SK-N-SH (cell line): ENCODE measurements at regions of chr10 and their contacts with region 1.

Region 1: GRCh38 chr10:79195091-79195923 is 126.5 kb downstream of the ZMIZ1 start:
- DNase-seq: peak; percentile 85
- H3K4me3 ChIP-seq: peak overlapping the region in 1 of 2 experiments; percentile 24; a peak in 1 of 4 replicates
- H3K27ac ChIP-seq: peak overlapping the region; percentile 70 to 93
- H3K4me1 ChIP-seq: peaks cover 25 to 72% of the 10 kb centered on the region in 2 experiments
- H3K27me3 ChIP-seq: no peaks in the 10 kb centered on the region
- CTCF ChIP-seq: peak; percentile 93
- EP300 ChIP-seq: no peak
- RAD21 ChIP-seq: peak; percentile 95

Region 2: GRCh38 chr10:78047314-78047891 is 1147.9 kb before region 1 on chr10:
- CTCF ChIA-PET with region 1: interaction called, 65 read pairs
- POLR2A ChIA-PET with region 1: interaction called, 3 read pairs
- DNase-seq: peak; percentile 80
- H3K4me3 ChIP-seq: no peak overlapping the region; a peak in 1 of 4 replicates
- H3K27ac ChIP-seq: peak overlapping the region in 1 of 2 experiments; percentile 70; a peak in 2 of 4 replicates
- H3K4me1 ChIP-seq: peaks cover 22 to 26% of the 10 kb centered on the region in 2 experiments; a peak in 3 of 4 replicates
- H3K27me3 ChIP-seq: no peaks in the 10 kb centered on the region
- CTCF ChIP-seq: peak; percentile 94
- EP300 ChIP-seq: peak in 1 of 2 experiments; percentile 57; a peak in 1 of 4 replicates
- RAD21 ChIP-seq: peak; percentile 100

Region 3: GRCh38 chr10:78964952-78965633 is 230.2 kb before region 1 on chr10:
- CTCF ChIA-PET with region 1: interaction called, 15 read pairs
- POLR2A ChIA-PET with region 1: no interaction called
- DNase-seq: peak; percentile 78
- H3K4me3 ChIP-seq: no peak overlapping the region; a peak in 1 of 4 replicates
- H3K27ac ChIP-seq: peak overlapping the region; percentile 59 to 99
- H3K4me1 ChIP-seq: peaks cover 33 to 93% of the 10 kb centered on the region in 2 experiments
- H3K27me3 ChIP-seq: no peaks in the 10 kb centered on the region
- CTCF ChIP-seq: no peak
- EP300 ChIP-seq: peak in 1 of 2 experiments; percentile 95; a peak in 3 of 4 replicates
- RAD21 ChIP-seq: peak; percentile 30; the same call in 1 of the 2 replicates

Region 4: GRCh38 chr10:79079490-79080355 is 115.6 kb before region 1 on chr10:
- CTCF ChIA-PET with region 1: interaction called, 129 read pairs
- POLR2A ChIA-PET with region 1: interaction called, 4 read pairs
- DNase-seq: no peak
- H3K4me3 ChIP-seq: no peak overlapping the region
- H3K27ac ChIP-seq: peak overlapping the region; percentile 26 to 66; a peak in 3 of 4 replicates
- H3K4me1 ChIP-seq: peaks cover 58 to 86% of the 10 kb centered on the region in 2 experiments
- H3K27me3 ChIP-seq: no peaks in the 10 kb centered on the region
- CTCF ChIP-seq: no peak
- EP300 ChIP-seq: no peak
- RAD21 ChIP-seq: no peak

Region 5: GRCh38 chr10:79127151-79127961 is 68.0 kb before region 1 on chr10:
- CTCF ChIA-PET with region 1: interaction called, 30 read pairs
- POLR2A ChIA-PET with region 1: interaction called, 3 read pairs
- DNase-seq: no peak
- H3K4me3 ChIP-seq: no peak overlapping the region
- H3K27ac ChIP-seq: peak overlapping the region; percentile 64 to 95
- H3K4me1 ChIP-seq: peaks cover 46 to 77% of the 10 kb centered on the region in 2 experiments
- H3K27me3 ChIP-seq: no peaks in the 10 kb centered on the region
- CTCF ChIP-seq: no peak
- EP300 ChIP-seq: no peak
- RAD21 ChIP-seq: no peak

Region 6: DNA sequence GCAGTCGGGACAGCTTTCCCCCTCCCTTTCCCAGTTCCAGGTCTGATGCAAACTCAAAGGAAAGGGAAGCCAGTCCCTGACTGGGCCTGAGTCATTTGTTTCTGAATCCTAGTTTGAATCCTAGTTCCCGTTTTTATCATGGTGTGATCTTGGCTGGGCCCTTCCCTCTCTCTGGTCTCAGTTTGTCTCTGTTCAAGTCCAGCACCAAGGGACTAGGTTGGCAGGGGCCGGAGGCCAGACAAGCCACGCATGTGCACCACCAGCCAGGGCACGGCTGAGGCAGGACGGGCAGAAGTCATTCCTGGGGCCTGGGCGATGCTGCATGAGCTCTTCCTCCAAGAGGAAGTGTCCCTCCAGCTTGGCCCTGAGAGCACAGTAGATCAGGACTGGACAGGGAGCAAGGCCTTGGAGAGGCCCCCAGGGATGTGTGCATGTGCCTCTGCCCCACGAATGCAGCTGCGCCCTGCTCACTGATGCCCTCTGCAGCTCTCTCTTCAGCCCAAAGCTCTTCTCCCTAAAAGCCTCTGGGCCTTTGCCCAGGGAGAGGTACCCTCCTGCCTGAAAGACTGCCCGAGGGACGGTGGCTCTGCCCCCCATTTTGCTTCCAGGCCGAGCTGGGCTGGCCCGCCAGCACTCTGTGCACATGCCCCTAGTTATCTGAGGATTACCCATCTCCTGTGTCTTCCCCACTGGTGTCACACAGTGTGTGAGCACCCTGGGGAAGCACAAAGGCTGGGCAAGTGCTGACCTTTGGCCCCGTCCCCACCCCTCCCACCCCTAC is 39.8 kb before region 1 on chr10:
- CTCF ChIA-PET with region 1: interaction called, 91 read pairs
- POLR2A ChIA-PET with region 1: interaction called, 4 read pairs
- DNase-seq: no peak
- H3K4me3 ChIP-seq: no peak overlapping the region
- H3K27ac ChIP-seq: peak overlapping the region; percentile 94 to 97
- H3K4me1 ChIP-seq: peaks cover 76 to 98% of the 10 kb centered on the region in 2 experiments
- H3K27me3 ChIP-seq: no peaks in the 10 kb centered on the region
- CTCF ChIP-seq: peak; percentile 20; the same call in 1 of the 2 replicates
- EP300 ChIP-seq: no peak
- RAD21 ChIP-seq: no peak

Region 7: DNA sequence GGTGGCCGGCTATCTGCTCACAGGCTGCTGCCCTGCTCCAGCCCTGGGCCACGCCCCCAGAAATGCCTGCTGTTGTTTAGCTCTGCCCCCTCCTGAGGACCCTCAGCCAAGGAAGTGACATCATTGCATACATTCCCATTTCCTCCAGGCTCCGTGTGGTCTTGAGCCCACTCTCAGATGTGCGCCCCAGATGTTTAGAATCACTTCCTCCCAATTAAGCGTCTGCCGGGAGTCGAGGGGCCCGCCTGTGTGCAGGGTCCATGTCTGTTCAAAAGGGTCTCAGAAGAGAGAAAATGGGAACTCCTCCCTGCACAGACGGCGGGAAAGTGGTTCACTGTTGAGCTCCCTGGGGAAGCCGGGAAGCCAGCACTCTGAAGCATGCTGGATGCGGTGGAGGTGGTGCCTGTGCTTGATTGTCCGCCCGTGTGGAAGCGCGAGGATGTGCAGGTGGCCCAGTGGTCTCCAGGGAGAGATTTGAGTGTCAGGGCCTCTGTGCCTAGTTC is 35.1 kb after region 1 on chr10:
- CTCF ChIA-PET with region 1: interaction called, 11 read pairs
- POLR2A ChIA-PET with region 1: no interaction called
- DNase-seq: peak; percentile 74
- H3K4me3 ChIP-seq: no peak overlapping the region
- H3K27ac ChIP-seq: peak overlapping the region in 1 of 2 experiments; percentile 89; a peak in 2 of 4 replicates
- H3K4me1 ChIP-seq: peaks cover 9 to 83% of the 10 kb centered on the region in 2 experiments; a peak in 3 of 4 replicates
- H3K27me3 ChIP-seq: no peaks in the 10 kb centered on the region
- CTCF ChIP-seq: no peak
- EP300 ChIP-seq: no peak
- RAD21 ChIP-seq: no peak